Dorsolateral prefrontal cortex (tissue), 120 donors: ENCODE measurements at regions of chr6 and their contacts with region 1.

Region 1: GRCh38 chr6:32195652-32195901 is 3.1 kb upstream of the GPSM3 start:
- DNase-seq: peak; percentile 100
- H3K4me3 ChIP-seq: peak overlapping the region; percentile 66 to 97 (median 87)
- H3K27ac ChIP-seq: peak overlapping the region; percentile 97 to 100 (median 100)
- H3K27me3 ChIP-seq: no peaks in the 10 kb centered on the region
- CTCF ChIP-seq: peak in 51 of 56 donors; percentile 5 to 77 (median 51)

Region 2: DNA sequence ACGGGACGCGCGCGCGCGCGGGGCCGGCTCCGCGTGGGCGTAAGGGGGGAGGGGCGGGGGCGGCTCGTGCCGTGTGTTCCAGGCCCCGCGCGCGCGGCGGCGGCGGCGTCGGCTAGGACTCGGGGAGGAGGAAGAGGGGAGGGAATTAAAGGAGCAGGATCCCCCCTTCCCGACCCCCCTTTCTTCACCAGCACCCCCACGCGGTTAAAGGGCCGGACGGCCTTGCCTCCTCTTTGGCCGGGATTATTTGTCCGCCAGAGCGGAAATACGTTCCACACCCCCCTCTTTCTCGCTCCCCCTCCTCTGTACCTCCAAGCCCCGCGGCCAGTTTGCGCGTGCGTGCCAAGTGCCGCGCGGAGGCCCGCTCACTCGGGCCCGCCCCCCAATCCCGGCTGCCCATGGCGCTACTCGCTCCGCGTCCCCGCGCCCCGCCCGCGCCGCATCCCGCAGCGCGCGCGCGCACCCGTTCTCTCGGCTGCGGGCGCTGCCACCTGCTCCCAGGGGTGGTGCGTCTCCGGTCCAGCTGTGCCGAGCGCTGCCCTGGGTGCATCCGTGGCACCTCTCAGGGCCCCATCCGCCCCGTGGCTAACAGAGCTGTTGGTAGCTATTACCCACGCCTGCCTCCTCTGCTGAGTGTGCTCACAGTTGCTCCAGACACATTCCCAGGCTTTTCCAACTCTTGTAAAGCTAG is 293.5 kb before region 1 on chr6 and contains the start of gene ZBTB12:
- intact Hi-C with region 1: loop called in 1 of 2 experiments (anchors 10 kb)
- DNase-seq: peak; percentile 91 to 97 (median 94)
- H3K4me3 ChIP-seq: peak within 1 kb of the TSS; percentile 52 to 96 (median 72)
- H3K27ac ChIP-seq: peak within 1 kb of the TSS; percentile 70 to 99 (median 95)
- H3K27me3 ChIP-seq: no peaks in the 10 kb centered on the region
- CTCF ChIP-seq: peak in 13 of 56 donors; percentile 8 to 35 (median 17)
- total RNA-seq, gene ZBTB12: 3.7 to 13.7 (median 7.6) TPM

Region 3: DNA sequence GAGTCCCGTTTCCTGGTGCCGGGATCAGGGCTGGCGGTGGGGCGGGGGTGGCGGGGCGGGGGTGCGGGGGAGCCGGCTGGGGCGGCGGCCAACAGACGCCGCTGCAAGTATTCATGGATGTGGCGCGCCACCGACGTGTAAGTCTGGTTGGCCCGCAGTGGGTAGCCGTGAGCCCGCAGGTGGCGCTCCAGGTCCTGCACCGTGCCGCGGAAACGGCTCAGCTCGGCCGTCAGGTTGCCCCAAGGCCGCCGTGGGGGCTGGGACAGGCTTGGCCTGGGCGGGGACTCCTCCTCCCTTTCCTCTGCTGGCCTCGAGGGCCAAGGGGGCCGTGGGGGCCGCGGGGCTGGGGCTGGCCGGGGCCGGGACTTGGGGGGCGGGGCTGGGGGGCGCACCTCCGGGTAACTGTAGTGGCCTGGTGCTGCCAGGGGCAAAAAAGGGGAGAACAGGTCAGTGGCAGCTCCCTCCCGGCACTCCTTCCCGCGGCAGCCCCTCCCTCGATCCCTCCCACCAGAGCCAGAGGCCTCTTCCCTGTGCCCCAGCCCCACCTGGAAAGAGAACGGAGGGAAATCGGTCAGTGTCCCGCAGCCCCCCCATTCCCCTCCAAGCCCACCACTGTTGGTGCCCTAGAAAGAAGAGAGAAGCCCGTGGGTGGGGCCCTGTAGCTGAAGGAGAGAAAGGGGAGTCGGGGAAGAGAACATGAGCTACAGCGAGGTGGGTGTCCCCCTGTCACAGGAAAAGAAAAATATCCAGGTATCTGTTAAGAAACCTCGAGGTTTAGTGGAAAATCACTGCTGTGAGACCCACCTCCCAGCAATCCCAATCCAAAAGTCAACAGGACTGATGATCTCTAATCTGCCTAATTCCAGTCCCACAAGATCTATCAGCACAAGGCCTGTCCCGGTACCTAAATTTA is 107.7 kb before region 1 on chr6:
- intact Hi-C with region 1: no loop called
- DNase-seq: peak in 2 of 10 donors; percentile 39 to 76
- H3K4me3 ChIP-seq: peak overlapping the region in 17 of 59 donors; percentile 4 to 44 (median 26)
- H3K27ac ChIP-seq: peak overlapping the region in 20 of 59 donors; percentile 1 to 82 (median 47)
- H3K27me3 ChIP-seq: peaks cover 0 to 18% (median 0%) of the 10 kb centered on the region in 45 donors
- CTCF ChIP-seq: peak in 48 of 56 donors; percentile 15 to 64 (median 42)

Region 4: GRCh38 chr6:32127717-32128592 is 67.6 kb before region 1 on chr6 and contains the start of gene ATF6B:
- intact Hi-C with region 1: loop called in 1 of 2 experiments (anchors 1 kb)
- DNase-seq: peak; percentile 98 to 100 (median 99)
- H3K4me3 ChIP-seq: peak within 1 kb of the TSS; percentile 60 to 100 (median 93)
- H3K27ac ChIP-seq: peak within 1 kb of the TSS in 57 of 59 donors; percentile 13 to 97 (median 91)
- H3K27me3 ChIP-seq: no peaks in the 10 kb centered on the region
- CTCF ChIP-seq: peak in 16 of 56 donors; percentile 3 to 58 (median 20)
- total RNA-seq, gene ATF6B: 61.3 to 117 (median 80.7) TPM

Region 5: DNA sequence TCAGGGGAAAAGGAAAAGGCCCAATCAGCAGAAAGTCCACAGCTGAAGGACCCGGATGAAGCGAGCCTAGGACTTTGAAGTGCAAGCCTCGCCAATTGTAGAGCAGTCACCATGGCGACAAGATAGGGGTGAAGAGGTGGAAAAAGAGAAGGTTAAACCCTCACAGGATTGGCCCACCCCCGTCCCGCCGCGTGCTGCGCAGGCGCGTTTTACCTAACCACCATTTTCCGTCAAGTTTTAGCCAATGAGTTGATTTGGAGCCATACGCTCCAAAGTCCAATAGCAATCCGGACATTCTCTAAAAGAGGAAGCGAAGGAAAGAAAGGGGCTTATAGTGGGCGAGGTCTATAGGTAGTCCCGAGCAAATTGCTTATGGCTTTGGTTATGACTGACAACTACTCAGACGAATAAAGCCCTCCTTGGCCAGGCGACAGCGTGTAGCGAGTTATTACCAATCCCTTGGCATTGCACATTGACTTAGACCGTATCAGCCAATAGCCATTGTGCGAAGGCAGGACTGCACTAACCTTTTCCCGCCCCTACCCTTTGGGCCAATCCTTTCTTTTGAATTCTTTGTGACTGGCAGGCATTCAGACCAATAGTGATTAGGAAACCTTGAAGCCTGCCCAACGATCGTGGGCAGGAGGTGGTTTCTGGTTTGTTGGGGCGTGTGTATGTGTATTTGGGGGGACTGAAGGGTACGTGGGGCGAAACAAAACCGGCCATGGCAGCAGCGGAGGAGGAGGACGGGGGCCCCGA is 17.6 kb before region 1 on chr6 and contains the start of gene RNF5:
- intact Hi-C with region 1: loop called (anchors 1 kb)
- DNase-seq: peak; percentile 75 to 99 (median 96)
- H3K4me3 ChIP-seq: peak within 1 kb of the TSS; percentile 49 to 98 (median 89)
- H3K27ac ChIP-seq: peak within 1 kb of the TSS; percentile 86 to 100 (median 99)
- H3K27me3 ChIP-seq: no peaks in the 10 kb centered on the region
- CTCF ChIP-seq: peak in 6 of 56 donors; percentile 2 to 23 (median 15)
- total RNA-seq, gene RNF5: 34.1 to 70.5 (median 51.5) TPM

Region 6: DNA sequence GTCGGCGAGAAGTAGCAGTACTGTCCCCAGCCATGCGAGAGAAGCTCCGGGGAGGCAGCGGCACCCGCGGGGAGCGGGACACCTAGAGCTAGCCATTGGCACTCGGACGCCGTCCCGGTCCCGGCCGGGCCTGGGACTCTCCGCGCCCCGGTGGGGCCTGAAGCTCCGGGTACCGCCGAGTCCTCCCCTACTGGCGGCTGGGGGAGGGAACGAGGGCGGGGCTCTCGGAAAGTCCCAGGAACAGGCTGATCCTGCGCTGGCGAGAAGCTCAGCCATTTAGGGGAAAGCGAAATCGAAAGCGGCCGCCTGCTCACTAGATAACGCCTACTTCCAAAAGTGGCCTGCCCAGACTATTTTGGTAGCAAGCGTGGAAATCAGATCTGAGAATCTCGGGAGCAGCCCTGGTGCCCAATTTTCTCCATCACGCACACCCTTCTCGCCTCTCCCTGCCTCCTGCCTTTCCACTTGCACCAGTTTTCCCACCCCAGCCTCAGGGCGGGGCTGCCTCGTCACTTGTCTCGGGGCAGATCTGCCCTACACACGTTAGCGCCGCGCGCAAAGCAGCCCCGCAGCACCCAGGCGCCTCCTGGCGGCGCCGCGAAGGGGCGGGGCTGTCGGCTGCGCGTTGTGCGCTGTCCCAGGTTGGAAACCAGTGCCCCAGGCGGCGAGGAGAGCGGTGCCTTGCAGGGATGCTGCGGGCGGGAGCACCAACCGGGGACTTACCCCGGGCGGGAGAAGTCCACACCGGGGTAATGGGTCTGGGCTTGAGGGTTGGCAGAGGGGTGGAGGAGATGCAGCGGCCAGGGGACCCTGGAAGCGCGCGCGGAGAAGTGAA is 658.2 kb after region 1 on chr6 and contains the starts of genes PSMB9 and TAP1:
- intact Hi-C with region 1: loop called in 1 of 2 experiments (anchors 5 kb)
- DNase-seq: peak; percentile 80 to 94 (median 92)
- H3K4me3 ChIP-seq: peak within 1 kb of the TSS; percentile 67 to 99 (median 92)
- H3K27ac ChIP-seq: peak within 1 kb of the TSS; percentile 87 to 100 (median 99)
- H3K27me3 ChIP-seq: no peaks in the 10 kb centered on the region
- CTCF ChIP-seq: peak in 55 of 56 donors; percentile 60 to 96 (median 80)
- total RNA-seq, gene PSMB9: 3.1 to 32.7 (median 12.7) TPM
- total RNA-seq, gene TAP1: 10.8 to 44.1 (median 18.6) TPM

Region 7: GRCh38 chr6:33200219-33201146 is 1004.9 kb after region 1 on chr6 and contains the starts of genes RXRB and SLC39A7:
- intact Hi-C with region 1: loop called in 1 of 2 experiments (anchors 10 kb)
- DNase-seq: peak; percentile 95 to 99 (median 98)
- H3K4me3 ChIP-seq: peak within 1 kb of the TSS; percentile 66 to 99 (median 87)
- H3K27ac ChIP-seq: peak within 1 kb of the TSS; percentile 95 to 100 (median 99)
- H3K27me3 ChIP-seq: no peaks in the 10 kb centered on the region
- CTCF ChIP-seq: peak in 28 of 56 donors; percentile 5 to 61 (median 23)
- total RNA-seq, gene RXRB: 47.2 to 81.0 (median 62.9) TPM
- total RNA-seq, gene SLC39A7: 23.7 to 48.3 (median 35.6) TPM